ENCODE measurements at regions of chr3 and their contacts with region 1.

Region 1: DNA sequence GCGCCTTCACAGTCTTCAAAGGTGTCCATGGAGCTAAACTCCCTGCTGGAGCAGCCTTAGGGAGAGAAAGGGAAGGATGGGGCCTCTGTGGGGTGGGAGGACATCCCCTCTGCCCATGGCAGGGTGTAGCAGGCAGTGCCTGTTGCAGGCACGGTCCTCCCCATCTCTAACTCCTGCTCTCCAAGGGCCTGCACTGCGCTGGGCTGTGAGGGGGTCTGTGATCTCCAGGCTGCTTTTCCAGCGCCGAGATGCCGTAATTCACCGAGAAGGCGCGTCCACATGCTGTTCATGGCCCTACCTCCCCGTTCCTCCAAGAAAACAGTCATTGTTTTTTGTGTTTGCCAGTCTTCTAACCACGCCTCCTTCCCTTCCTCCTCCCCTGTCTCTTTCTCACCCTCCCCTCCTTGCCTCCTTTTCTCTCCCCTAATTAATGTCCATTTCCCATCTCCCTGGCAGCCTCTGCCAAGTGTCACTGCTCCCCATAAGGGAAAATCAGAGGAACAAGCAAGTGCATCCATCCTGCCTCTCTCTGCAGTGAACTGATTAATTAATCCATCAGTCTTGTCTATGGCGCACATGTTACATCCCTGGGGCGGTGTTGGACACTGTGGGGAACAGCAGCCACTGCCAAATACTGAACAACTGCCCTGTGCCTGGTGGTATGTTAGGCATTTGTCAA is 17.7 kb upstream of the LAMP3 start:
- DNase-seq: no peak
- ATAC-seq: no peak
- H3K4me3 ChIP-seq: no peak overlapping the region
- H3K4me1 ChIP-seq: peaks cover 15% of the 10 kb centered on the region
- CTCF ChIP-seq: no peak

Region 2: DNA sequence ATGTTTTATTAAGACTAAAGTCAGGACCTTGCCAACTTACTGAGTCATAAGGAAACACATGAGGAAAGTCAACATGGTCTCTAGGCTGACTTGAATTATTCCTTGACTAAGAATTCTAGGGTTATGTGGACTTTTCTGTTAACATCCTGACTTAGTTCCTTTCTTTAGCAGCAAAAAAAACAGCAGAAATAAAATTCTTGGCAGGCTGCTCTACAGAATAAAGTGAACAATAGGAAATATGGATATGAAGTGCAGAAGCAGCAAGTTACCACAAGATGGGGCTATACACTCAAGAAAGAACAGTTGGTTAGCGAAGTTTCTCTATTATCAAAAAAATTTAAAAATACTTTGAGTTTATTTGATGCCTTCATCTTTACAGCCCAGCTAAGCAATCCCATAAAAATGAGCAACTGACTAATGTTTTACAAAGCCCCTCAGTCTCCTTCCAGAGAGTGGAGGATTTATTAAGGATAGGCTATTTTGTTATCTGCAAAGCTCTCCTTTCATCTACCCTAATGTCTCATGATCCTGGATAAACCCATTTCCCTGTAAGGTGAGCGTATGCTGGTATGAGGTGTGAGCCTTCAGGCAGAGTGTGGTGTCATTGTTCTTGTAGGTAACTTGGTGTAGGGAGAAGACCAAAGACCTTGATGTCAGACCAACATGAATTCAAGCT is 57.8 kb before region 1 on chr3:
- intact Hi-C with region 1: loop called in 1 of 2 experiments (anchors 5 kb)
- DNase-seq: no peak
- ATAC-seq: peak; percentile 65
- H3K4me3 ChIP-seq: no peak overlapping the region
- H3K4me1 ChIP-seq: no peaks in the 10 kb centered on the region
- CTCF ChIP-seq: peak; percentile 60

Region 3: GRCh38 chr3:183427876-183428446 is 247.7 kb after region 1 on chr3:
- intact Hi-C with region 1: no loop called
- DNase-seq: peak; percentile 53 to 69 (median 62)
- ATAC-seq: peak; percentile 51
- H3K4me3 ChIP-seq: peak overlapping the region; percentile 17
- H3K4me1 ChIP-seq: peaks cover 16% of the 10 kb centered on the region
- CTCF ChIP-seq: no peak

Region 4: DNA sequence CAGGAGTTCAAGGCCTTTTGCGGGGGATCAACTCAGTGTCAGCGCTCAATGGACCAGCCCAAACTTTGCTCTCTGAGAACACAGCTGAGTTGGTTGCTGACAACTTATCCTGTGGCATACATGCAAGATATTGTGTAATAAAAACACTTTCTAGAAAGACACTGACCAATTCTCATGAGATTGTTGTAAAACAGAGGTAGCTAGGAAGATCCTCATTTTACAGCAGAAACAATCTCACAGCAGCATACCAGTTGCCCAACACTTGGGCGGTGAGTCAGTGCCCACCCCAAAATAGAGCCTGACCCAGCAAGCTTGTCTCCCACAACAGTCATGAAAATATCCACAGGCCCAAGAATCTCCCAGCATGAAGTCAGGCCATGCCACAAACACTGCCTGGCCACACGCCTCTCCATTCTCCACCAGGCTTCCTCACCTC is 357.1 kb after region 1 on chr3:
- intact Hi-C with region 1: no loop called
- DNase-seq: no peak
- ATAC-seq: peak; percentile 23
- H3K4me3 ChIP-seq: no peak overlapping the region
- H3K4me1 ChIP-seq: no peaks in the 10 kb centered on the region
- CTCF ChIP-seq: no peak

Region 5: GRCh38 chr3:183555541-183556081 is 375.4 kb after region 1 on chr3 and contains the start of gene KLHL6:
- intact Hi-C with region 1: no loop called
- DNase-seq: peak; percentile 53 to 73 (median 54)
- ATAC-seq: peak; percentile 88
- H3K4me3 ChIP-seq: no peak within 1 kb of the TSS
- H3K4me1 ChIP-seq: no peaks in the 10 kb centered on the region
- CTCF ChIP-seq: no peak
- total RNA-seq, gene KLHL6: 1.9 to 3.0 (median 1.9) TPM